Activated CD4-positive, alpha-beta T cell treated with anti-CD3 and anti-CD28 coated beads, Interleukin-2, amount 10 ng/mL, durations not matched to agents 7 days and 5 days (primary cell): ENCODE measurements at regions of chr14 and their contacts with region 1.

Region 1: DNA sequence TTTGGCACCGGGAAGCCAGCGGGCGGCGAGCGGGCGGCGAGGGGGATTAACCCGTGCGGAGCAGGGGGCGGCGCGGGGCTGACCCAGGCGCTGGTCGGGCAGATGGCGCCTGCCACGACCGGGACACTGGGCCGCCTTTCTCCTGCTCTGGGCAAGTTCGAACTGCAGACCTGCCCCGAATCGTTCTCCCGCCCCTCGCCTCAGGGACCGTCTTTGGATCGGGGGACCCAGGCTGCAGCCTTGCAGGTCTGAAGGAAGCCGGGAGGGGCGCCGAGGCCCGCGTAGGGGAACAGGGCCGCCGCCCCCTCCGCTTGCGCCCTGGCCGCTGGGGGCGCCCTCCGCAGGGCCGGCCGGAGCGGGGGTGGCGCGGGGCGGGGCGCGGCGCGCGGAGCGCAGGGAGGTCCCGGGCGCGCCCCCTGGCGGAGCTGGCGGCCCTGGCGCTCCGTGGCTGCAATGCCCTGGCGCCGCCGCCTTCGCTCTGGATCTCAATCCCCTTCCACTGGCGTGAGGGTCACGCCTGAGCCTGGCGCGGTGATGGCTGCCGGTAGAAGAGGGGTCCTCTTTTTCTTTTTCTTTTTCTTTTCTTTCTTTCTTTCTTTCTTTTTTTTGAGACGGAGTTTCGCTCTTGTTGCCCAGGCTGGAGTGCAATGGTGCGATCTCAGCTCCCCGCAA is 449 bp upstream of the LTBP2 start:
- DNase-seq: peak; percentile 77
- H3K4me3 Mint-ChIP-seq: peak overlapping the region; percentile 67
- H3K27ac Mint-ChIP-seq: no peak overlapping the region
- H3K4me1 Mint-ChIP-seq: peaks cover 24% of the 10 kb centered on the region
- H3K27me3 Mint-ChIP-seq: peaks cover 49% of the 10 kb centered on the region

Region 2: GRCh38 chr14:74595006-74595735 is 17.3 kb before region 1 on chr14:
- CTCF ChIA-PET with region 1: interaction called, 64 read pairs
- POLR2A ChIA-PET with region 1: no interaction called
- DNase-seq: no peak
- H3K4me3 Mint-ChIP-seq: no peak overlapping the region
- H3K27ac Mint-ChIP-seq: no peak overlapping the region
- H3K4me1 Mint-ChIP-seq: no peaks in the 10 kb centered on the region
- H3K27me3 Mint-ChIP-seq: no peaks in the 10 kb centered on the region

Region 3: GRCh38 chr14:74627076-74627475 is 14.6 kb after region 1 on chr14:
- CTCF ChIA-PET with region 1: interaction called, 33 read pairs
- POLR2A ChIA-PET with region 1: no interaction called
- DNase-seq: no peak
- H3K4me3 Mint-ChIP-seq: no peak overlapping the region
- H3K27ac Mint-ChIP-seq: no peak overlapping the region
- H3K4me1 Mint-ChIP-seq: peaks cover 2% of the 10 kb centered on the region
- H3K27me3 Mint-ChIP-seq: peaks cover 14% of the 10 kb centered on the region

Region 4: DNA sequence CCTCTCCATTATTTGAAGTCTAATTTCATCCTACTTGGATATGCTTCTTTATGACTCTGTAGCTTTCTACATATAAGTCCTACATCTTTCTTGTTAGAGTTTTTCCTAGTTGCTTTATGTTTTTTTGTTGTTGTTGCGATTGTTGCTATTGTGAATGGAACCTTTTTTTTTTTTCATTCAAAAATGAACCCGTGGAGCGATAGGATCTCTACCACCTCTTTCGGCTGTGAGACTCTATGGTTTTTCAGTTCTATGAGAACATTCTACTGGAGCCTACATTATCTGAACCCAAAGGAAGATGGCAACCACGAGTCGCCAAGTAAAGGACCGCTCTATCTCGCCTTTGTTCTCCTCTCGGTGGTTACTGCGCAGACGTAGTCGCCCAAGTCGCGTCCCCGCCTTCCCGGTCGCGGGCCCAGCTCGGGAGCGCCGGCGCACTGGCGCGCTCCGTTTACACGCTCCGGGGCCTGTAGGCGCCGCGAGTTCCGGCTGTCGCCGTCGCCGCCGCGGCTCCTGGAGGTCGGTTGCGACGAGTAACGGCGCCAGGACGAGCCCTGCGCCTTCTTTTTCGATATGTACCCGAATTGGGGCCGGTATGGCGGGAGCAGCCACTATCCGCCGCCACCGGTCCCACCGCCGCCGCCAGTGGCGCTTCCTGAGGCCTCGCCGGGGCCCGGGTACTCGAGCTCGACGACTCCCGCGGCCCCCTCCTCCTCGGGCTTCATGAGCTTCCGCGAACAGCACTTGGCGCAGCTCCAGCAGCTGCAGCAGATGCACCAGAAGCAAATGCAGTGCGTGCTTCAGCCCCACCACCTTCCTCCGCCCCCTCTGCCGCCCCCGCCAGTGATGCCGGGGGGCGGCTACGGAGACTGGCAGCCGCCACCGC is 150.7 kb after region 1 on chr14 and contains the start of gene YLPM1:
- CTCF ChIA-PET with region 1: interaction called, 13 read pairs
- POLR2A ChIA-PET with region 1: no interaction called
- DNase-seq: peak; percentile 93
- H3K4me3 Mint-ChIP-seq: peak within 1 kb of the TSS; percentile 98
- H3K27ac Mint-ChIP-seq: peak within 1 kb of the TSS; percentile 88
- H3K4me1 Mint-ChIP-seq: peaks cover 39% of the 10 kb centered on the region
- H3K27me3 Mint-ChIP-seq: no peaks in the 10 kb centered on the region
- total RNA-seq, gene YLPM1: 72.4 to 73.8 TPM